Activated T-helper 2 cell treated with anti-CD3 and anti-CD28 coated beads, Interferon-gamma antibody, Interleukin-2, Interleukin-4, amounts not matched to agents 10 μg/mL and 5 μg/mL and 100 μg/mL, durations not matched to agents 14 hours and 24 hours and 36 hours (primary cell): ENCODE measurements at regions of chr20 and their contacts with region 1.

Region 1: DNA sequence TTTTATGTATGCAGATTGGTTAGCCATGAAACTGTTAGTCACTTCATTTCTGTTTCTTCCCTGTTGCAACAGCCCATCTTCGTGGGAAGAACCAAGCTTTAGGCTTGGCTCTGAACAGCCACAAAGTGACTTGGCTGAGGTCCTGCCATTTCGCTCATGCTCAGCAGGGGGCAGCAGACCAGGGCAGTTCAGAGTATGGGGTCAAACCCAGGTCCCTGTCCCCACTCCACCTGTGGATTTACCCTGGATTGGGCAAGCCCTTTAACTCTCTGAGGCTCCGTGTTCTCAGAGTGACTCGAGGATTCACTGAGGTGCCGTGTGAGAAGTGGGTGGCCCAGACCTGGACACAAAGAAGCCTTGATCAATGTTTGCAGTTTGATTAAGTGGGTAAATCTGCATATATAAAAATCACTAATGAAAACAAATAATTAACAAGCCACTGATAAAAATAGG is 19.8 kb upstream of the MAP1LC3A start:
- DNase-seq: no peak
- H3K4me3 Mint-ChIP-seq: no peak overlapping the region
- H3K27ac Mint-ChIP-seq: no peak overlapping the region
- H3K4me1 Mint-ChIP-seq: peaks cover 4% of the 10 kb centered on the region
- H3K27me3 Mint-ChIP-seq: no peaks in the 10 kb centered on the region

Region 2: GRCh38 chr20:34768096-34768495 is 229.4 kb after region 1 on chr20:
- intact Hi-C with region 1: loop called (anchors 2 kb)
- DNase-seq: no peak
- H3K4me3 Mint-ChIP-seq: no peak overlapping the region
- H3K27ac Mint-ChIP-seq: no peak overlapping the region
- H3K4me1 Mint-ChIP-seq: peaks cover 2% of the 10 kb centered on the region
- H3K27me3 Mint-ChIP-seq: no peaks in the 10 kb centered on the region